AG04450 (cell line): ENCODE measurements at regions of chr4 and their contacts with region 1.

Region 1: GRCh38 chr4:153127760-153128494 is 76.3 kb upstream of the TRIM2 start:
- DNase-seq: peak; percentile 65
- H3K4me3 ChIP-seq: no peak overlapping the region
- H3K27ac ChIP-seq: no peak overlapping the region
- H3K27me3 ChIP-seq: no peaks in the 10 kb centered on the region
- CTCF ChIP-seq: peak; percentile 84

Region 2: DNA sequence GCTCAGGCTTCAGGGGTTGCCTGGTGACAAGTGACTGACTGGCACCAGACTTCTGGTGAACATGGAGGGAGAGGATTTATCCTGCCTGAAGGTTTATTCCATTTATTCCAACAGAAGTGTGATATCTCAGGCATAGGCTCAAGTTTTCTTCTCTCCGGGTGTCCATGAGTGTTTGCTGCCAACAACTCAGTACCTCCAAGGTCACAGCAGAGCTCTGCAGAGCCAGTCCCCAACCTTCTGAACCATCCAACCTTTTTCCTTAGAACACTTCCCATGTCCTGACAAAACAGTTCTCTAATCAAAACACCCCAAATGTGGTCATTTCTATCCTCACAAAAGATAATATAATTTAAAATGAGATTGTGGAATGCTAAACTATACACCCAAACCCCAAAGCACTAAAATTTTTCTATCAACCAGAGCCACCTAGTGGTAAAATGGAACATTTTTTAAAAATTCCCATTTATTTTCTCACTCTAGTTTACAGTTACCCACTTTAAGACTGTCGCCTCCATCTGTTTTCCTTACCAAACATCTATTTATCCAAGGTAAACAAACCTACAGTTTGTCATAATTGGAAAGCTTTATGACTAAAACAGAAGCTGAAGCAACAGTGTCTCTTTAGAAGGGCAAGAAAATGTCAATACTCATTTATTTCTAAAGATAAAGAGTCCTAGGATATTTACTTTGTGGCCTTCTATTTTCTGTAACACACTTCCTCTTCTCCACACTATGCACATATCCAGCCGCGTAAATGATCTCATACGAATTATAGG is 487.7 kb before region 1 on chr4:
- CTCF ChIA-PET with region 1: interaction called, 16 read pairs
- POLR2A ChIA-PET with region 1: no interaction called
- DNase-seq: no peak
- H3K4me3 ChIP-seq: no peak overlapping the region
- H3K27ac ChIP-seq: no peak overlapping the region
- H3K27me3 ChIP-seq: peaks cover 3% of the 10 kb centered on the region
- CTCF ChIP-seq: peak; percentile 59

Region 3: GRCh38 chr4:152850377-152850776 is 277.6 kb before region 1 on chr4:
- CTCF ChIA-PET with region 1: interaction called, 91 read pairs
- POLR2A ChIA-PET with region 1: no interaction called
- DNase-seq: no peak
- H3K4me3 ChIP-seq: no peak overlapping the region
- H3K27ac ChIP-seq: no peak overlapping the region
- H3K27me3 ChIP-seq: no peaks in the 10 kb centered on the region
- CTCF ChIP-seq: no peak

Region 4: DNA sequence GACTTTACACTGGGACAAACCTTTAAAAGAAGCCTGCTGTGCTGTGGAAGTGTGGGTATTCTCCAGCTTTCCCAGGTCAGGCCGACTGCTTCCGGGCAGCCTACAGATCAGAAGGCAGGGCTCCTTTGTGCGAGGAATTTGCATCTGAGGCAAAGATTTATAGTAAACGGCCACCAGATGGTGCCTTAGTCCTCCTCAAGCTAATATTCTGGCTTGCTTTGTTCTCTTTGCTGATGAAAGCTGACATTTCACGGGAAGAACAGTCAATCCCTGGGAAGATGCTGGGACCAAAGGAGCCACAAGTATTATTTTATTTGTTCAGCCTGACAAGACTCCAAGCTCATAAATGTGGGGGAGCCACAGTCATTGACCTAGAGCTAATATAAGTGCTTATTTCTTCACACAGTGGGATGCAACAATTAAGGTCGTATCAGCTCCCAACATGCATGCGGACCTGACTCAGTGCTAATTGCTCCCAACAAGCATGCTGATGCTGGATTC is 44.4 kb before region 1 on chr4:
- CTCF ChIA-PET with region 1: interaction called, 224 read pairs
- POLR2A ChIA-PET with region 1: no interaction called
- DNase-seq: peak; percentile 66
- H3K4me3 ChIP-seq: no peak overlapping the region
- H3K27ac ChIP-seq: no peak overlapping the region
- H3K27me3 ChIP-seq: peaks cover 19% of the 10 kb centered on the region
- CTCF ChIP-seq: peak; percentile 70

Region 5: DNA sequence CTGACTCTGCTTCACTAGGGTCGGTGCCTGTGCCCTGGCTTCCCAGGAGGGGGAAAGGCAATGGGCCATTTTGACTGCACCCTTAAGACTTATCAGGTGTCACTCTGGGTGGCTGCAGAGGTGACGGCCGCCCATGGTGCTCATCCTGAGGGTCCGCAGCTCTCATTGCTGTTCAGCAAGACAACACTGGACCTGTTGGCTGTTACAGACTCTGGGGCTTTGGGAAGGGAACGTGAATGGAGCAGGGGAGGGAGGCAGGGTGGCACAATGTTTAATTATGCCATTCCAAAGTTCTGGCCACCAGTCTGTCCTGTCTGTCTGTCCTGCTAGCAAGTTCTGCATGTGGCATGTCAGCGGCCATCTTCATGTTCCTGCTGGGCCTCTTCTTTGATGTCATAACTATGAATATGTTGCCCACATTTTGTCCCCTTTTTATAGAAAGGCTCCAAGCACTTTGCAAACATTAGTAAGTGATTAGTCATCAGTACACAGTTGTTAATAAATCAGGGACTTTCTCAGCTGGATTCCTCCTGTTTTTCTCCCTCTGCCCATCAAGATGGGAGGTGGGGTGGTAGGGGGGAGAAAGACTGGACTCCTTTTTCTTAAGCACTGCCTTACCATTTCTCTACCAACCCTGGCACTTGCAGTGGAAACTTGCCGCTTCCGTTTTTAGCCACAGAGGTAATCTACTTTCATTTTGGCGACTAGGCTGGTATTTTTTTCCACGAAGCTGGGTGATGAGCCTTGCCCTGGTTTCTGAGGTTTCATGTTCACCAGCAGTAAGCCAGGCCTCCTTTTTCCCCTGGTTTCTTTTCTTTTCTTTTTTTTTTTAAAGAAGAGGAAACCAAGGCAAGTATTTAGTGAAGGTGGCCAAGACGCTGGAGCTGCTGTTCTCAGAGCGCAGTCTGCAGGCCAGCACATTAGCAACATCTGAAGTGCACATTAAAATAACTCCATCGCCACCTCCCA is 12.3 kb before region 1 on chr4:
- CTCF ChIA-PET with region 1: interaction called, 15 read pairs
- POLR2A ChIA-PET with region 1: interaction called, 3 read pairs
- DNase-seq: no peak
- H3K4me3 ChIP-seq: peak overlapping the region; percentile 25; the same call in 1 of the 2 replicates
- H3K27ac ChIP-seq: peak overlapping the region; percentile 21
- H3K27me3 ChIP-seq: peaks cover 17% of the 10 kb centered on the region
- CTCF ChIP-seq: no peak

Region 6: GRCh38 chr4:153643406-153644383 is 515.8 kb after region 1 on chr4:
- CTCF ChIA-PET with region 1: interaction called, 14 read pairs
- POLR2A ChIA-PET with region 1: no interaction called
- DNase-seq: no peak
- H3K4me3 ChIP-seq: no peak overlapping the region
- H3K27ac ChIP-seq: no peak overlapping the region
- H3K27me3 ChIP-seq: no peaks in the 10 kb centered on the region
- CTCF ChIP-seq: peak; percentile 61